Activated naive CD4-positive, alpha-beta T cell treated with anti-CD3 and anti-CD28 coated beads for 36 hours (primary cell): ENCODE measurements at regions of chr12 and their contacts with region 1.

Region 1: GRCh38 chr12:110280779-110281548 is at the start of gene ATP2A2:
- DNase-seq: peak; percentile 89
- H3K4me3 Mint-ChIP-seq: peak within 1 kb of the TSS; percentile 90
- H3K27ac Mint-ChIP-seq: peak within 1 kb of the TSS; percentile 87
- H3K4me1 Mint-ChIP-seq: peaks cover 43% of the 10 kb centered on the region
- H3K27me3 Mint-ChIP-seq: no peaks in the 10 kb centered on the region
- total RNA-seq, gene ATP2A2: 95.5 to 98.6 TPM

Region 2: GRCh38 chr12:109920261-109920780 is 360.6 kb before region 1 on chr12:
- CTCF ChIA-PET with region 1: no interaction called
- intact Hi-C with region 1: no loop called
- DNase-seq: no peak
- H3K4me3 Mint-ChIP-seq: no peak overlapping the region
- H3K27ac Mint-ChIP-seq: no peak overlapping the region
- H3K4me1 Mint-ChIP-seq: no peaks in the 10 kb centered on the region
- H3K27me3 Mint-ChIP-seq: no peaks in the 10 kb centered on the region

Region 3: GRCh38 chr12:110048242-110049027 is 232.5 kb before region 1 on chr12 and contains the start of gene C12orf76:
- CTCF ChIA-PET with region 1: no interaction called
- intact Hi-C with region 1: loop called (anchors 1 kb)
- DNase-seq: peak; percentile 96
- H3K4me3 Mint-ChIP-seq: peak within 1 kb of the TSS; percentile 83
- H3K27ac Mint-ChIP-seq: peak within 1 kb of the TSS; percentile 87
- H3K4me1 Mint-ChIP-seq: peaks cover 28% of the 10 kb centered on the region
- H3K27me3 Mint-ChIP-seq: no peaks in the 10 kb centered on the region
- total RNA-seq, gene C12orf76: 12.1 to 12.9 TPM

Region 4: DNA sequence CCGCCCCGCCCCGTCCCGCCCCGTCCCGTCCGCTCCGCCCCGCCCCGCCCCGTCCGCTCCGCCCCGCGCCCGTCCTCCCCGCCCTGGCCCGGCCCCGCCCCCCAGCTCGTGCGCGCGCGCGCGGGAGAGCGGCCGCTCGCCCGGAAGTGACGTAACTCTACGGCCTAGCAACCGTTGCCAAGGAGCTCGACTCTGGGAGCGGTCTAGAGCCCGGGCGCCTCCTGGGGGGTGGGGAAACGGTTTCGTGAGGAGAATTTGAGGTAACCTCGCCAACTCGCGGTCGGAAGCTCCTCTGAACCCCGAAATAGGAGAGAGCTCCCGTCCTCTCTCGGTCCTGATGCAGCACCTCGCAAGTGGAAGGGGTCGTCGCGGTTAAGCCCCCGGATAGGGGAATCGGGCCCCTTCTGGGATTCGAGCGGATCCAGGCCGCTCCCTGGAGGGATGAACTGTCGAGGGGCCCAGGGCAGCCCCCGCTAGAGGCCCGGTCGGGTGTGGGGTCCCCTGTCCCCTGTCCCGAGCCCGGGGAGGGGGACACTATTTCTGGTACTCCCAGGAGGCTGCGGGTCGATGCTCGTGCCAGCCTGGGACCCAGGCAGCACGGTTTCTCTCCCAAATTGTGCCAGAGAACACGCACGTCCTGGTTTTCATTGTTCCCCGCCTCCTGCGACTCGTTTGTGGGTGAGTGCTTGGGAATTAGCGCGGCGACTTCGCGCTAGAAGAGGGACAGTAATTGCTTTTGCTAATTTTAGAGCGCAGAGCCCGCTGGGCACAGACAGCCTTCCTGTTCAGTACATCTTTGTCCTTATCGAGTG is 156.6 kb before region 1 on chr12 and contains the start of gene IFT81:
- CTCF ChIA-PET with region 1: no interaction called
- intact Hi-C with region 1: loop called (anchors 1 kb)
- DNase-seq: peak; percentile 95
- H3K4me3 Mint-ChIP-seq: peak within 1 kb of the TSS; percentile 89
- H3K27ac Mint-ChIP-seq: no peak within 1 kb of the TSS
- H3K4me1 Mint-ChIP-seq: peaks cover 7% of the 10 kb centered on the region
- H3K27me3 Mint-ChIP-seq: peaks cover 2% of the 10 kb centered on the region
- total RNA-seq, gene IFT81: 1.7 to 2.2 TPM

Region 5: GRCh38 chr12:110349531-110350151 is 68.7 kb after region 1 on chr12:
- CTCF ChIA-PET with region 1: no interaction called
- intact Hi-C with region 1: loop called (anchors 5 kb)
- DNase-seq: peak; percentile 78
- H3K4me3 Mint-ChIP-seq: no peak overlapping the region
- H3K27ac Mint-ChIP-seq: peak overlapping the region; percentile 69
- H3K4me1 Mint-ChIP-seq: peaks cover 35% of the 10 kb centered on the region
- H3K27me3 Mint-ChIP-seq: peaks cover 2% of the 10 kb centered on the region

Region 6: DNA sequence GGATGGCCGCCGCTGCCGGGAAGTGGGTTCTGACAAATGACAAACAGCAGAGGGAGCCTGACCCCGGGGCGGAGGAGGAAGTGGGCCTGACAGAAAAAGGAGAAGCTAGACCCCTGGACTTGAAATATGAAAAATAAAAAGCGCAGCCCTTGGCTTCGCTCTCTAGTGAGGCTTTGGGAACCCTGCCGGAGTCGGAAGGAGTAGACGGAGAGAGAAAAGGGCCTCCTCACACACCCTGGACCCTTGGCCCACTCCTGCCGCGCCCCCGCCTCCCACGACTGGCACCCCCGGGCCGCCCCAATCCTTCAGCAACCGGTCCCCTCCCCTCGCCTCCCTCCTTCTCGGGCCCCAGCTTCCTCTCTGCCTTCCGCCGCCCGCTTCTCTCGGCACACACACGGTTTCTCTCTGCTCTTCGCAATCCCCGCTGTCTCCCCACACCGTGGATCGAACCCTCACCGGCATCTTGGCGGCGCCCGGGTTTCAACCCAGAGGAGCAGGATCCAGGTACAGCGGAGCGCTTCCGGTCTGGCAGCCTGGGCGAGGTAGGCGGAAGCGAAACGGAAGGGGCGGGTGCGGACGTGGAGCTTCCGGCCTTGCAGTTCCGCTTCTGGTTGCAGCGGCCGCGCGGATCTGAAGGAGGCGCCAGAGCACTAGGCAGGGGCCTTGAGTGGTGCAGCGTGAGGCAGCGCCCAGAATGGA is 169.0 kb after region 1 on chr12 and contains the start of gene ARPC3:
- CTCF ChIA-PET with region 1: no interaction called
- intact Hi-C with region 1: loop called (anchors 5 kb)
- DNase-seq: peak; percentile 98
- H3K4me3 Mint-ChIP-seq: peak within 1 kb of the TSS; percentile 100
- H3K27ac Mint-ChIP-seq: peak within 1 kb of the TSS; percentile 100
- H3K4me1 Mint-ChIP-seq: peaks cover 38% of the 10 kb centered on the region
- H3K27me3 Mint-ChIP-seq: no peaks in the 10 kb centered on the region
- total RNA-seq, gene ARPC3: 279 to 311 TPM

Region 7: GRCh38 chr12:110742718-110743570 is 462.0 kb after region 1 on chr12 and contains the start of gene PPP1CC:
- CTCF ChIA-PET with region 1: no interaction called
- intact Hi-C with region 1: loop called (anchors 5 kb)
- DNase-seq: peak; percentile 93
- H3K4me3 Mint-ChIP-seq: peak within 1 kb of the TSS; percentile 99
- H3K27ac Mint-ChIP-seq: peak within 1 kb of the TSS; percentile 98
- H3K4me1 Mint-ChIP-seq: peaks cover 37% of the 10 kb centered on the region
- H3K27me3 Mint-ChIP-seq: no peaks in the 10 kb centered on the region
- total RNA-seq, gene PPP1CC: 280 to 285 TPM